HCT116 (cell line): ENCODE measurements at regions of chr9 and their contacts with region 1.

Region 1: GRCh38 chr9:134024828-134025605 is at the start of gene BRD3OS:
- DNase-seq: peak; percentile 98
- ATAC-seq: peak; percentile 91
- H3K4me3 ChIP-seq: peak within 1 kb of the TSS; percentile 70 to 73
- H3K27ac ChIP-seq: peak within 1 kb of the TSS; percentile 50
- H3K4me1 ChIP-seq: peaks cover 3 to 23% of the 10 kb centered on the region in 2 experiments; a peak in 3 of 4 replicates
- H3K27me3 ChIP-seq: no peaks in the 10 kb centered on the region
- CTCF ChIP-seq: no peak
- POLR2A ChIP-seq: no peak
- RAD21 ChIP-seq: no peak
- total RNA-seq, gene BRD3OS: 17.0 TPM

Region 2: GRCh38 chr9:133658442-133659431 is 366.3 kb before region 1 on chr9:
- CTCF ChIA-PET with region 1: no interaction called
- POLR2A ChIA-PET with region 1: no interaction called
- RAD21 ChIA-PET with region 1: no interaction called
- intact Hi-C with region 1: no loop called
- DNase-seq: peak; percentile 15
- ATAC-seq: peak; percentile 95
- H3K4me3 ChIP-seq: peak overlapping the region; percentile 20 to 48
- H3K27ac ChIP-seq: no peak overlapping the region; the same call in 1 of the 2 replicates
- H3K4me1 ChIP-seq: peaks cover 17 to 20% of the 10 kb centered on the region in 2 experiments
- H3K27me3 ChIP-seq: no peaks in the 10 kb centered on the region
- CTCF ChIP-seq: no peak
- POLR2A ChIP-seq: no peak
- RAD21 ChIP-seq: no peak

Region 3: DNA sequence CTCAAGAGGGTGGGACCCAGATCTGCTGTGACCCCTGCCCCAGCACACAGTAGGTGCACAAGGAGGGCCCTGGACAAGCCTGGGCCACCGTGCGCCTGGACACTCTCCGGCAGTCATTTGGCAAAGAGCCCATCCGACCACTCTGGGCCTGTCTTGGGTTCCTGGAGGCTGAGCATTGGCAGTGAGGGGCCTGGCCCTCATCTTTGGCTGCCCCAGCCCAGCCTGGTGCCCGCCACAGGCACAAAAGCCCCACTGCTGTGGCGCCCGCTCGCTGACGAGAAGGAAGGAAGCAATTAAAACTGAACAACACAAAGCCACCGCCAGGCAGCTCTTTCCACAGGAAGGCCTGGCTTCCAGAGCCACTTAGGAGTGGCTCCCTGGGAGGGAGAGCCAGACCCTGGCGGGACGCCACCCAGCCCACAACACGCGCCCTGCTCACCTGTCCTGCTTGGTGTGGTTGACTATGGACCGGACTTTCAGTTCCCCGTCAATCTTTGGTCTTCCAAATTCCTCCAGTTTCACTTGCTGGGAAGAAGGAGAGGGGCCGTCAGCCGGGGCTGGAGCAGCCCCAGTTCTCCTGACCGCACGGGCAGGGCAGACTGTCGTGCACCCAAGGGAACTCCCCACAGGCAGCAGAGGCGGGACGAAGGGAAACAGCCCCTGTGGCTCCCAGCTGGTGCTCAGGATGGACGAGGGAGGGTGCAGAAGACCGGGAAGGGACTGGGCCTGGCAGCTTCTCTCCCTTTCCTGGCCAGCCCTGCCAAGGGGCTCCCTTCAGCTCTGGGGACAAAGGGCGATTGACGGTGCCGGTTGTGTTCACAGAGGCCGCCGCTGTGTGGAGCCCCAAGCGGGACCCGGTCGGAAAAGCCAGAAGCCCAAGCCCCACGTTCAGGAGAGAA is 235.9 kb before region 1 on chr9:
- CTCF ChIA-PET with region 1: no interaction called
- POLR2A ChIA-PET with region 1: no interaction called
- RAD21 ChIA-PET with region 1: no interaction called
- intact Hi-C with region 1: no loop called
- DNase-seq: no peak
- ATAC-seq: no peak
- H3K4me3 ChIP-seq: no peak overlapping the region
- H3K27ac ChIP-seq: no peak overlapping the region
- H3K4me1 ChIP-seq: peaks cover 2 to 7% of the 10 kb centered on the region in 2 experiments; a peak in 2 of 4 replicates
- H3K27me3 ChIP-seq: no peaks in the 10 kb centered on the region
- CTCF ChIP-seq: no peak
- POLR2A ChIP-seq: no peak
- RAD21 ChIP-seq: no peak

Region 4: DNA sequence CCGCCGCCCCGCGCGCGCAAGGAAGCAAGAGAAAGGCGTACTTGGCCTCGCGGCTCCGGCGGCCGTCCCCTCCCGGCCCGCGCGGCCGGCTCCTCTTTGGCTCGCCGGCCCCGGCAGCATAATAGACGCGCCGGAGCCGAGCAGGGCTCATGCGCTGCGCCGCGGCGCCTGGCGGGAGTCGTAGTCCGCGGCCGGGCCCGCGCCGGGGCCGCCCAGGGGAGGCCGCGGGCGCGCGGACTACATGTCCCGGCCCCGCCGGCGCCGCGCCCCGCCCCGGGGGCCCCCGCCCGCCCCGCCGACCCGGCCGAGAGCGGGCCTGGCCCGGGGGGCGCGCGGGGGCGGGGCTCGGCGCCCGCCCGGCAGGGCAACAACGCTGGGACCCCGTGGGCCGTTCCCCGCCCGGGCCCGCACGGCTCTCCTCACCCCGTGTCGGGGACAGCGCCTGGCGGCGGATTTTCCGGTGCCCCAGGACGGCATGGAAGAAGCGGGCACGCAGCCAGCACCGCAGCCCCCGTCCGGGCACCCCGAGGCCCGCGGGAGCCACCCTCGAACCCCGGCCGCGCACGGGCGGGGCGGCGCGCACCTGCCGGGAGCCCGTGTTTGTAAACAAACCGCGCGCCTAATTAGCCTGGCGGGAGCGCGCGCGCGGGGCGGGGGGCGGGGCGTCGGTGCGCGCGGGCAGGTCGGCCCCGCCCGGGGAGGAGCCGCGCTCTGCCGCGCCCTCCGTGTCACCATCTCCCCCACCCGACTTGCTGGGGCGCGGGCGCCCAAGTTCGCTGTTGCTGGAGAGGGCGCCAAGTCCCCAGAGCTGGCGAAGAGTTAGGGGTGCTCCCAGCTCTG is 43.1 kb after region 1 on chr9 and contains the start of gene BRD3:
- CTCF ChIA-PET with region 1: no interaction called
- POLR2A ChIA-PET with region 1: no interaction called
- RAD21 ChIA-PET with region 1: no interaction called
- intact Hi-C with region 1: loop called (anchors 1 kb)
- DNase-seq: peak; percentile 71
- ATAC-seq: peak; percentile 93
- H3K4me3 ChIP-seq: peak within 1 kb of the TSS; percentile 88 to 89
- H3K27ac ChIP-seq: peak within 1 kb of the TSS; percentile 93
- H3K4me1 ChIP-seq: peaks cover 10 to 22% of the 10 kb centered on the region in 2 experiments; a peak in 3 of 4 replicates
- H3K27me3 ChIP-seq: peaks cover 11% of the 10 kb centered on the region
- CTCF ChIP-seq: no peak
- POLR2A ChIP-seq: peak; percentile 66
- RAD21 ChIP-seq: no peak
- total RNA-seq, gene BRD3: 40.7 TPM